ENCODE measurements at regions of chr1 and their contacts with region 1.

Region 1: DNA sequence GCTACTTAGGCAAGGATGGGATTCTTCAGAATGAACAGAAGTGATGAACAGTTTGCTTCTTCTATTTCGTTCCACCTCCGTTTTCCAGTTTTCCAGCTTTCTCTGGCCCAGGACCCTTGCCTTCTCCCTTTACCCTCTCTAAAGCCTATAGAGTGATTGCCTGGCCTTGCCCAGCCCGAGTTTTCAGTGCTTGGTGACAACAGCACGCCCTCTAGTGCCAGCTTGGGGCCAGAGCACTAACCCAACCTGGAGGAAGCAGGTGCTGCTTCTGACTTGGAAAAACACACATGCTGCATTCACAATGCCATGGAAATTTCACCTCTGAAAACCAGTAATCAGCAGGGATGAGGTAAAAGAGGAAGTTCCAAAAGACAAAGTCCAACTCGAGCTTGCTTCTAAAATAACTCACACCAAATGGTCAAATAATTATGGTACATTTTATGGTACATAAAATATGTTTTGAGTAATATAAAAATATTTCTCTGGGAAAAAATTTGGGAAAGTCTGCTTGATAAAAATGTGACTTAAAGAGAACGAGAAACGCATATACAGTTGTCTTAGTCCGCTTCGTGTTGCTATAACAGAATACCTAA is 26.1 kb downstream of the UBE2T start:
- DNase-seq: peak; percentile 86
- H3K4me3 Mint-ChIP-seq: no peak overlapping the region
- H3K27ac Mint-ChIP-seq: no peak overlapping the region
- H3K4me1 Mint-ChIP-seq: no peaks in the 10 kb centered on the region
- H3K27me3 Mint-ChIP-seq: peaks cover 32% of the 10 kb centered on the region

Region 2: DNA sequence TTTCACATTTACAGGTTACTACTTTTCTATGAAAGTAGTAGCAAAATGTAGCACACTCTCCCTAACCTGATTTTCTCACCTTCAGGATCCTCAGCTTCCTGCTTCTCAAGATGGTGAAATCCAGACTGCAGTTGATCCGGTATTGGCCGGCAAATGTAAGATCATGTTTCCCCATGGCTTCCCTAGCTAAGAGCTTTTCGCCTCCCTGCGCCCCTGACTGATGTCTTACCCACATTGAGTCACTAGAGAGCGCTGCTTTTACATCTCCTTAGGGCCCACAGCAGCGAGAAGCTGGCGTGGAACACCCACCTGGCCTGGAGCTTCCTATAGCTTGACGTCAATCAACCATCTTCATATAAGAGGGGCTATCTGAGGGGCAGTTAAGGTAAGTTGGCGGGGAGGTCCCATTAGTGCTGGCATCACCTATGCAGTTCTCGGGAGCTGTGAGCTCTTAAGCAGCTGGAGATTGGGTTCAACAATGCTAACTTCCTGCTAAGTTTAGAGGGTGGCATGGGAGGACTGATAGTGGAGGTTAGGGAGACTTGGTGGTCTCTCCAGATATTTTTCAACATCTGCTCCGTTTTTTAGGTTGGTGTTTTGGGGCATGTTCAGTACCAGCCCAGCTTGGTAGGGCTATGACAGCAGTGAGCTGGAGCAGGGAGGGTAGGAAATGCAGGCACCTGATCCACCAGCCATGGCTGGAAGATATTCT is 160.8 kb before region 1 on chr1:
- CTCF ChIA-PET with region 1: interaction called, 13 read pairs
- DNase-seq: peak; percentile 70
- H3K4me3 Mint-ChIP-seq: no peak overlapping the region
- H3K27ac Mint-ChIP-seq: peak overlapping the region; percentile 62
- H3K4me1 Mint-ChIP-seq: peaks cover 47% of the 10 kb centered on the region
- H3K27me3 Mint-ChIP-seq: no peaks in the 10 kb centered on the region

Region 3: DNA sequence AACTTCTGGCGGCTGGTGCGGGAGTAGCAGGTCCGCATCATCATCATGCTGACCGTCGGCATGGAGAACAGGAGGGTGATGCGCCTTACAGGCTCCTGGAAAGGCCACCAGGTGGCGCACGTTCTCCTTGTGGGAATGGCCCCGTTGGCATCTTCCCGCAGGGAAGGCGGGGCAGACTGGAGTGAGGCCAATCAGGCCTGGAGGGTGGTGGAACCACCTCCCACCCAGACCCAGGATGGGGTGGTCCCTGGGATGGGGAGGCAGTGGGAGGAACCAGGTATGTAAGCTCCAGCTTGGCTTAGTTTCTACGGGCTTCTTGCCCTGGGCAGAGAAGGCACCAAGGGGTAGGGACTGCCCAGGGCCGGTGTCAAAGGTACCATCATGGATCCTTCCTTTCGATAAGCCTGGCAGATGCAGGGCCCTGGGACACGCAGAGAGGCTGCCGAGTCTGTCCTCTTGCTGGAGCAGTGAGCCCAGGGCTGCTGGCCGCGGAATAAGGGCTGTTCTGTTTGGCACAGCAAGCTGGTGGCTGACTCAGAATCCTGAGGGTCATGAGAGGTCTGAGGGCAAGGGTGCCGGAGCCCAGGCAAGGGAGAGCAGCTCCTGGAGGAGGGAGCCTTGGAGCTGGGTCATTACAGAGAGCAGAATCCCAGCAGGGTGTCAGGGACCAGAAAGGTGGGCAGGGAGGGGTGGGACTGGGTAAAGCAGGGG is 130.8 kb before region 1 on chr1:
- CTCF ChIA-PET with region 1: interaction called, 26 read pairs
- DNase-seq: peak; percentile 79
- H3K4me3 Mint-ChIP-seq: no peak overlapping the region
- H3K27ac Mint-ChIP-seq: no peak overlapping the region
- H3K4me1 Mint-ChIP-seq: peaks cover 10% of the 10 kb centered on the region
- H3K27me3 Mint-ChIP-seq: peaks cover 79% of the 10 kb centered on the region

Region 4: DNA sequence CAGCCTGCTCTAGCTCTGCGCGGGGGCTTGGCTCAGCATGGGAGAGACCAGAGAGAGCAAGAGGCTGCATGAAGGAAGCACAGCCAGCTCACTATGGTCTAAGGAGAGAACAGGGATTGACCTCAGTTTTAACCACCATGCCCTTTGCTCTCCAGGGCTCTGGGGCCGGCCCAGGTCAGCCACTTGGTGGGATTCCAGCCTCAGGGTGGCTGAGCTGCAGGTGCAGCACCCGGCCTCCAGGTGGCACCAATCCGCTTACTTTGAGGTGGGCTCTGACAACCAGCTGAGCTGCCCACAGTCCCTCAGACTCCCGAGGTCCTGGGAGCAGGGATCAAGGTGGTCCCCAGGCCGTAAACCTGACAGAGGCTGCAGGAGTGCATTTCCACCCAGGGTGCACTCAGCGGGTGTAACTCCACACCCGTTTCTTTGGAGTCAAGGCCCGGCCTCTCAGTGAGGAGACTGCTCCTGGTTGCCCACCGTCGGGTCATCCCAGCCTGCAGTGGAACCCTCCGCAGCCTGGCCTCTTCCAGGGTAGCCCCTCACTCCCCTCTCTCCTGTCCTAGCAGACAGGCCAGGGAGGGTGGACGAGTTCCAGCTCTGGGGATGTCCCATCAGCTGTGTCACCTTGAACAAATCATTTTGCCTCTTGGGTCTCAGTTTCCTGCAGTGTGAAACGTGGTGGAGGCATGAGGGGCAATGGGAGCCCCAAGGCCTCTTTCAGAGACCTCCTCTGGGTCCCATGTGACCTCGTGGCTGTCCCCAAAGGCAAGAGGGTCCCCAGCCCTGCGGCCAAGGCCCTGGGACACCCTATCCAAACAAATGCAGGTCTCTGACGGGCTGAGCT is 122.7 kb before region 1 on chr1:
- CTCF ChIA-PET with region 1: interaction called, 43 read pairs
- DNase-seq: peak; percentile 70
- H3K4me3 Mint-ChIP-seq: no peak overlapping the region
- H3K27ac Mint-ChIP-seq: no peak overlapping the region
- H3K4me1 Mint-ChIP-seq: peaks cover 3% of the 10 kb centered on the region
- H3K27me3 Mint-ChIP-seq: peaks cover 64% of the 10 kb centered on the region

Region 5: GRCh38 chr1:202274611-202275010 is 41.1 kb before region 1 on chr1:
- CTCF ChIA-PET with region 1: interaction called, 93 read pairs
- DNase-seq: peak; percentile 66
- H3K4me3 Mint-ChIP-seq: no peak overlapping the region
- H3K27ac Mint-ChIP-seq: no peak overlapping the region
- H3K4me1 Mint-ChIP-seq: no peaks in the 10 kb centered on the region
- H3K27me3 Mint-ChIP-seq: peaks cover 34% of the 10 kb centered on the region

Region 6: GRCh38 chr1:202304375-202304774 is 11.3 kb before region 1 on chr1:
- CTCF ChIA-PET with region 1: interaction called, 21 read pairs
- DNase-seq: no peak
- H3K4me3 Mint-ChIP-seq: no peak overlapping the region
- H3K27ac Mint-ChIP-seq: no peak overlapping the region
- H3K4me1 Mint-ChIP-seq: peaks cover 6% of the 10 kb centered on the region
- H3K27me3 Mint-ChIP-seq: peaks cover 47% of the 10 kb centered on the region